ENCODE measurements at regions of chr16 and their contacts with region 1.

Region 1: GRCh38 chr16:29315615-29316517 is 90.6 kb downstream of the NPIPB11 start:
- DNase-seq: peak in 1 of 2 donors; percentile 30
- ATAC-seq: no peak
- H3K4me3 ChIP-seq: no peak overlapping the region
- H3K27ac ChIP-seq: no peak overlapping the region
- H3K4me1 ChIP-seq: no peaks in the 10 kb centered on the region
- H3K27me3 ChIP-seq: no peaks in the 10 kb centered on the region

Region 2: DNA sequence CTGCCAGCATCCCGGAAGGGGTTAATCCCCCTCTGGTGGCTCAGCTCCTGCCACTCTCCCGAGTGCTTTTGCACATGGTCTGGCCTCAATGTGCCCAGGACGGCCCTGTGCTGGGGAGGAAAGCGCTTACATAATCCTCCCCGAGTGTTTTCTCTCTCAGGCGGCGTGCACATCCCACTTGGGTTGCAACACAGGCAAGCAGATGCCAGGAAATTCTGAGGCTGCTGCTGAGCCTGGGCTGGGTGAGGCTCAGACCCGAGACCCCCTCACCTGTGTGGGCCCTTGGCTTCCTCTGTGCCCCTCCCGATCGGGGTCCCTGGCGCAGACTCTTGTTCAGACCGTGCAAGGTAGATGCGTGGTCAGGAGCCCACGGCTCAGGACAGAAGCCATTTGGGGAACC is 186.4 kb before region 1 on chr16:
- intact Hi-C with region 1: loop called in 1 of 2 experiments (anchors 10 kb)
- DNase-seq: peak; percentile 73 to 77
- ATAC-seq: peak; percentile 72
- H3K4me3 ChIP-seq: no peak overlapping the region
- H3K27ac ChIP-seq: no peak overlapping the region
- H3K4me1 ChIP-seq: no peaks in the 10 kb centered on the region
- H3K27me3 ChIP-seq: no peaks in the 10 kb centered on the region

Region 3: GRCh38 chr16:29182501-29182900 is 133.4 kb before region 1 on chr16:
- intact Hi-C with region 1: no loop called
- DNase-seq: peak in 1 of 2 donors; percentile 67
- ATAC-seq: no peak
- H3K4me3 ChIP-seq: no peak overlapping the region
- H3K27ac ChIP-seq: no peak overlapping the region
- H3K4me1 ChIP-seq: no peaks in the 10 kb centered on the region
- H3K27me3 ChIP-seq: no peaks in the 10 kb centered on the region

Region 4: DNA sequence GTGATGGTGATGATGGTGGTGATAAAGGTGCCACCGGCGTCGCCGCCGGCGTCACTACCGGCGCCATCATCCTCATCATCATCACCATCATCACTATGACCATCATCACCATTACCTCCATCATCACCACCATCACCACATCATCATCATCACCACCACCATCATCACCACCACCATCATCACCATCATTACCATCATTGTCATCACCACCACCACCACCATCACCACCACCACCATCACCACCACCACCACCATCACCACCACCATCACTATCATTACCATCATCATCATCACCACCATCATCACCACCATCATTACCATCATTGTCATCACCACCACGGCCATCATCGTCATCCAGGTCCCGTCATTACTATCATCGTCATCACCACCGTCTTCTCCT is 89.1 kb before region 1 on chr16:
- intact Hi-C with region 1: loop called in 1 of 2 experiments (anchors 10 kb)
- DNase-seq: no peak
- ATAC-seq: no peak
- H3K4me3 ChIP-seq: no peak overlapping the region
- H3K27ac ChIP-seq: no peak overlapping the region
- H3K4me1 ChIP-seq: no peaks in the 10 kb centered on the region
- H3K27me3 ChIP-seq: no peaks in the 10 kb centered on the region